ENCODE measurements at regions of chr1 and their contacts with region 1.

Region 1: DNA sequence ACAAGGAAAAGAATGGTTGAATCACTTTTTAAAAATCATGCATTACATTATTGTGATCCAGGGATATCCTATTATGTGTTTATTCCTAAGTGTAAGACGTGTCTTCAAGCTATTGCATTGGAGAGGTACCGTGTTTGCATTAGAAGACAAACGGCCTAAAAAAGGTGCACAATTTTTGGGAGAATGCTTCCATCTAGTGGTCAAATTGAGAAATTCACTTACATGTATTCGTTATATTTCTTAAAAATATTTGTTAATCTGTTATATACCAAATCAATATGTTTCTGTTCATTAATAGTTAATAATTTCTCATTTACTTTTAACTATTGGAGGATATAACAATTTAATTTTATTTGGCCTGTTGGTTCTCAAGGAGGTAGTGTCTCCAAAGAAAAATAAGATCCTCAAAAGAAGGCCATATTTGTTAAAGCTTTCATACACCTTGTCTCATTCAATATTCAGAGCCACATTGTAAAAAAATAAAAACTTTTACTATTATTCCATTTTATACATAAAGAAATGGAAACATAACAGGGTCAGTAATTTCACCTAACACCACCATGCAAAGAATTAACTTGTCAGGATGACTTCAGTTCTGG is 40.5 kb upstream of the KCTD3 start:
- DNase-seq: peak in 1 of 2 donors; percentile 67
- ATAC-seq: no peak
- H3K4me3 ChIP-seq: no peak overlapping the region
- H3K4me3 Mint-ChIP-seq: no peak overlapping the region
- H3K27ac ChIP-seq: no peak overlapping the region
- H3K27ac Mint-ChIP-seq: no peak overlapping the region
- H3K4me1 ChIP-seq: no peaks in the 10 kb centered on the region
- H3K4me1 Mint-ChIP-seq: no peaks in the 10 kb centered on the region
- H3K27me3 ChIP-seq: no peaks in the 10 kb centered on the region
- H3K27me3 Mint-ChIP-seq: no peaks in the 10 kb centered on the region
- CTCF ChIP-seq: peak; percentile 45

Region 2: GRCh38 chr1:214623430-214623829 is 903.2 kb before region 1 on chr1:
- intact Hi-C with region 1: loop called (anchors 10 kb)
- DNase-seq: no peak
- ATAC-seq: no peak
- H3K4me3 ChIP-seq: no peak overlapping the region
- H3K4me3 Mint-ChIP-seq: no peak overlapping the region
- H3K27ac ChIP-seq: no peak overlapping the region
- H3K27ac Mint-ChIP-seq: no peak overlapping the region
- H3K4me1 ChIP-seq: no peaks in the 10 kb centered on the region
- H3K4me1 Mint-ChIP-seq: no peaks in the 10 kb centered on the region
- H3K27me3 ChIP-seq: no peaks in the 10 kb centered on the region
- H3K27me3 Mint-ChIP-seq: no peaks in the 10 kb centered on the region
- CTCF ChIP-seq: no peak

Region 3: GRCh38 chr1:215330426-215330825 is 196.2 kb before region 1 on chr1:
- intact Hi-C with region 1: no loop called
- DNase-seq: no peak
- ATAC-seq: no peak
- H3K4me3 ChIP-seq: no peak overlapping the region
- H3K4me3 Mint-ChIP-seq: no peak overlapping the region
- H3K27ac ChIP-seq: no peak overlapping the region
- H3K27ac Mint-ChIP-seq: no peak overlapping the region
- H3K4me1 ChIP-seq: no peaks in the 10 kb centered on the region
- H3K4me1 Mint-ChIP-seq: no peaks in the 10 kb centered on the region
- H3K27me3 ChIP-seq: no peaks in the 10 kb centered on the region
- H3K27me3 Mint-ChIP-seq: no peaks in the 10 kb centered on the region
- CTCF ChIP-seq: no peak

Measured in natural killer cell (primary cell).